Psoas muscle (tissue), 8 donors: ENCODE measurements at regions of chr12 and their contacts with region 1.

Region 1: GRCh38 chr12:62731055-62731820 is 203.7 kb downstream of the PPM1H start:
- DNase-seq: no peak
- ATAC-seq: no peak
- H3K4me3 ChIP-seq: no peak overlapping the region
- H3K27ac ChIP-seq: no peak overlapping the region
- H3K4me1 ChIP-seq: peaks cover 11% of the 10 kb centered on the region
- H3K27me3 ChIP-seq: no peaks in the 10 kb centered on the region
- CTCF ChIP-seq: no peak

Region 2: DNA sequence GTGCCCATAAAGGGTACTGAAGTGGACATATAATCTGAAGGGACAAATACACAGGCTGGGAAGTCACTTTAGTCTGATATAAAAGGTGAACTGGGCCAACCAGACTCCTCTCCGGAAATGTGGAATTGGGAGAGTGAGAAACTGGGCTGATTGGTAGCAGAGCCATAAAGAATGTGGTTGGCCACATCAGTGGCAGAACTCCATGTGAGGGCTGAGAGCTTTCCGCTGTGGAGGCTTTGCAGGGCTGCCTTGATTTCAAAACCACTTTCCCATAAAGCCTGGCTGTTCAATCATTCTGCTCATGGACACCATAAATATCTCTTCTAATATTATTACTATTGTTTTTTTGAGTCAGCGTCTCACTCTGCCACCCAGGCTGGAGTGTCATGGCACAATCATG is 44.3 kb before region 1 on chr12:
- intact Hi-C with region 1: loop called in 1 of 2 experiments (anchors 1 kb)
- DNase-seq: no peak
- ATAC-seq: no peak
- H3K4me3 ChIP-seq: no peak overlapping the region
- H3K27ac ChIP-seq: no peak overlapping the region
- H3K4me1 ChIP-seq: no peaks in the 10 kb centered on the region
- H3K27me3 ChIP-seq: no peaks in the 10 kb centered on the region
- CTCF ChIP-seq: no peak